HepG2 (cell line): ENCODE measurements at regions of chr3 and their contacts with region 1.

Region 1: GRCh38 chr3:120678331-120678947 is 3.6 kb downstream of the HGD start:
- DNase-seq: peak; percentile 96
- ATAC-seq: peak; percentile 85
- H3K4me3 ChIP-seq: peak overlapping the region; percentile 82 to 90 (median 82); a peak in 5 of 6 replicates
- H3K27ac ChIP-seq: peak overlapping the region; percentile 99
- H3K4me1 ChIP-seq: peaks cover 54% of the 10 kb centered on the region
- H3K27me3 ChIP-seq: no peaks in the 10 kb centered on the region; a peak in 1 of 5 replicates
- CTCF ChIP-seq: no peak
- EP300 ChIP-seq: peak in 1 of 2 experiments; percentile 72; a peak in 1 of 4 replicates
- POLR2A ChIP-seq: peak; percentile 43 to 70; a peak in 3 of 4 replicates
- RAD21 ChIP-seq: peak; percentile 1; the same call in 1 of the 2 replicates

Region 2: GRCh38 chr3:120693439-120694186 is 15.2 kb after region 1 on chr3:
- CTCF ChIA-PET with region 1: no interaction called
- POLR2A ChIA-PET with region 1: interaction called, 33 read pairs
- in situ Hi-C with region 1: no loop called
- intact Hi-C with region 1: loop called (anchors 1 kb)
- DNase-seq: peak; percentile 86
- ATAC-seq: peak; percentile 86
- H3K4me3 ChIP-seq: no peak overlapping the region
- H3K27ac ChIP-seq: peak overlapping the region; percentile 67
- H3K4me1 ChIP-seq: peaks cover 47% of the 10 kb centered on the region
- H3K27me3 ChIP-seq: no peaks in the 10 kb centered on the region
- CTCF ChIP-seq: no peak
- EP300 ChIP-seq: peak in 1 of 2 experiments; percentile 74; a peak in 2 of 4 replicates
- POLR2A ChIP-seq: no peak
- RAD21 ChIP-seq: no peak

Region 3: DNA sequence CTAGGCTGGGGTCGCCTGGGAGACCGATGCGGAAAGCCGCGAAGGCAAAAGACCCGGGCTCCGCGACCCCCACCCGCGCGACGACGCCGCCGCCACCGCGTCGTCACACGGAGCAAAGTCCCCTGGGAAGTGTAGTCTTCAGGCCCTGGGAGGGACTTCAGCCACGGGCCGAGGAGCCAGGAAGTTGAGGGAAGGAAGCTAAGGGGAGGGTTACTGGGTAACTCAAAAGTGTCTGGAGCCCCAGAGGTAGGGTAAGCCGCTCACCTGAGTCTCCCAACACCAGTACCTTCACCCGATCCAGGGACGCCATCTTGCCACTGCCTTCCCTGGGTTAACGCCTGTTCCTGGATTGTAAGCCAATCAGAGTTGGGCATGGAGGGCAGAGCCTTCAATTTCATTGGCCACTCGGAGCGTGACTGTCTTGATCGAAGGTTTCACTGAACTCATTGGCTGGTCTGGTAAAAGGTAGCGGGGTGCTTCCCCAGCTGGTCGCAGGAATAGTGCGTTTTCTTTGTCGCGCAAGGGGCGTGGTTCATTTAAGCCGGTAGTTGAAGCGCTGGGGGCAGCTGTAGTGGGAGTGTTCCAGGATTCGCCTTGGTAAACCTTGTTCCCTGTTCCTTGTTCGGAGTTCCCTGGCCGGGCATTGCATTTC is 63.9 kb after region 1 on chr3 and contains the starts of genes GTF2E1 and RABL3:
- CTCF ChIA-PET with region 1: no interaction called
- POLR2A ChIA-PET with region 1: interaction called, 18 read pairs
- in situ Hi-C with region 1: loop called (anchors 5 kb)
- intact Hi-C with region 1: loop called (anchors 1 kb)
- DNase-seq: peak; percentile 99
- ATAC-seq: peak; percentile 98
- H3K4me3 ChIP-seq: peak within 1 kb of the TSS; percentile 89 to 98 (median 90)
- H3K27ac ChIP-seq: peak within 1 kb of the TSS; percentile 98
- H3K4me1 ChIP-seq: peaks cover 29% of the 10 kb centered on the region
- H3K27me3 ChIP-seq: no peaks in the 10 kb centered on the region; a peak in 1 of 5 replicates
- CTCF ChIP-seq: no peak
- EP300 ChIP-seq: 0 out of 4 replicates have a peak, but pooled peaks of 1 of the 2 experiments have one; percentile 11
- POLR2A ChIP-seq: peak; percentile 77 to 92
- RAD21 ChIP-seq: no peak
- total RNA-seq, gene GTF2E1: 21.5 and 29.0 TPM in 2 replicates
- total RNA-seq, gene RABL3: 31.9 and 48.3 TPM in 2 replicates

Region 4: DNA sequence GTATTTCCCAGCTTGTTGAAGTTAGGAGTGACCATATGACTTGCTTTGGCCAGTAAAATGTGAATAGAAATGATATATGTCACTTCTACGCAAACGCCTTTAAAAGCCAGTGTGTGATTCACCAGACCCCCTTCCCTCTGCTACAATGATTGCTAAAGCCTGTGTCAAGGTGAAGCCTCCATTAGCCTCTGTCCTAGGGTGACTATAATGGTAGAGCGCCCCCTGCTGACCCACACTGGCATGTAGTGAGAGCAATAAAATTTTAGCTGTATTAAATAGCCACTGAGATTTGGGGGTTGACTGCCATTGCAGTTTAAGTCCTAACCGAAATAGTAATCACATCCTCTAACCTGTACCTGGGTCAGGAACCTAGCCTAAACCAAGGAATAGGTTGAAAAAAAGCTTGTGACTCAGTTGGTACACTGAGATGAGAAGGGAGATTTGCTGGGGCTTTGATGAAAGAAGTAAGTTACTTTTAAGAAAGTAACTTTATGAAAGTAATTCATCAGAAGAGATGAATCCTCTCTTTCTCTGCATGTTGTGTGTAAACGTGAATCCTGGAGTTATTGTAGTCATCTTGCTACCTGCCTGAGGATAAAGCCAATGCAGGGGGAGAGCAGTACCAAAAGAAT is 116.7 kb after region 1 on chr3:
- CTCF ChIA-PET with region 1: no interaction called
- POLR2A ChIA-PET with region 1: no interaction called
- in situ Hi-C with region 1: no loop called
- intact Hi-C with region 1: loop called (anchors 1 kb)
- DNase-seq: peak; percentile 73
- ATAC-seq: peak; percentile 94
- H3K4me3 ChIP-seq: no peak overlapping the region
- H3K27ac ChIP-seq: no peak overlapping the region
- H3K4me1 ChIP-seq: peaks cover 27% of the 10 kb centered on the region
- H3K27me3 ChIP-seq: peaks cover 0 to 4% of the 10 kb centered on the region in 2 experiments; a peak in 2 of 5 replicates
- CTCF ChIP-seq: peak; percentile 86
- EP300 ChIP-seq: no peak
- POLR2A ChIP-seq: no peak
- RAD21 ChIP-seq: peak; percentile 78